ENCODE measurements at regions of chr6 and their contacts with region 1.

Region 1: GRCh38 chr6:34887753-34888513 is at the start of gene TAF11:
- DNase-seq: peak; percentile 91 to 93
- H3K4me3 ChIP-seq: peak within 1 kb of the TSS; percentile 56
- H3K4me3 Mint-ChIP-seq: peak within 1 kb of the TSS; percentile 98
- H3K27ac Mint-ChIP-seq: peak within 1 kb of the TSS; percentile 98
- H3K4me1 ChIP-seq: peaks cover 7% of the 10 kb centered on the region
- H3K4me1 Mint-ChIP-seq: peaks cover 16% of the 10 kb centered on the region
- H3K27me3 ChIP-seq: no peaks in the 10 kb centered on the region
- H3K27me3 Mint-ChIP-seq: no peaks in the 10 kb centered on the region
- CTCF ChIP-seq: no peak
- total RNA-seq, gene TAF11: 26.2 and 28.3 TPM in 2 replicates

Region 2: GRCh38 chr6:34940030-34940434 is 52.1 kb after region 1 on chr6:
- CTCF ChIA-PET with region 1: no interaction called
- POLR2A ChIA-PET with region 1: interaction called, 4 read pairs
- intact Hi-C with region 1: loop called (anchors 5 kb)
- DNase-seq: peak; percentile 65
- H3K4me3 ChIP-seq: no peak overlapping the region
- H3K4me3 Mint-ChIP-seq: peak overlapping the region; percentile 30
- H3K27ac Mint-ChIP-seq: peak overlapping the region; percentile 16
- H3K4me1 ChIP-seq: peaks cover 28% of the 10 kb centered on the region
- H3K4me1 Mint-ChIP-seq: peaks cover 22% of the 10 kb centered on the region
- H3K27me3 ChIP-seq: no peaks in the 10 kb centered on the region
- H3K27me3 Mint-ChIP-seq: no peaks in the 10 kb centered on the region
- CTCF ChIP-seq: no peak

Region 3: GRCh38 chr6:35031611-35032529 is 143.9 kb after region 1 on chr6:
- CTCF ChIA-PET with region 1: no interaction called
- POLR2A ChIA-PET with region 1: no interaction called
- intact Hi-C with region 1: no loop called
- DNase-seq: peak; percentile 13 to 39
- H3K4me3 ChIP-seq: no peak overlapping the region
- H3K4me3 Mint-ChIP-seq: no peak overlapping the region
- H3K27ac Mint-ChIP-seq: peak overlapping the region; percentile 3
- H3K4me1 ChIP-seq: peaks cover 11% of the 10 kb centered on the region
- H3K4me1 Mint-ChIP-seq: peaks cover 11% of the 10 kb centered on the region
- H3K27me3 ChIP-seq: no peaks in the 10 kb centered on the region
- H3K27me3 Mint-ChIP-seq: no peaks in the 10 kb centered on the region
- CTCF ChIP-seq: no peak

Region 4: DNA sequence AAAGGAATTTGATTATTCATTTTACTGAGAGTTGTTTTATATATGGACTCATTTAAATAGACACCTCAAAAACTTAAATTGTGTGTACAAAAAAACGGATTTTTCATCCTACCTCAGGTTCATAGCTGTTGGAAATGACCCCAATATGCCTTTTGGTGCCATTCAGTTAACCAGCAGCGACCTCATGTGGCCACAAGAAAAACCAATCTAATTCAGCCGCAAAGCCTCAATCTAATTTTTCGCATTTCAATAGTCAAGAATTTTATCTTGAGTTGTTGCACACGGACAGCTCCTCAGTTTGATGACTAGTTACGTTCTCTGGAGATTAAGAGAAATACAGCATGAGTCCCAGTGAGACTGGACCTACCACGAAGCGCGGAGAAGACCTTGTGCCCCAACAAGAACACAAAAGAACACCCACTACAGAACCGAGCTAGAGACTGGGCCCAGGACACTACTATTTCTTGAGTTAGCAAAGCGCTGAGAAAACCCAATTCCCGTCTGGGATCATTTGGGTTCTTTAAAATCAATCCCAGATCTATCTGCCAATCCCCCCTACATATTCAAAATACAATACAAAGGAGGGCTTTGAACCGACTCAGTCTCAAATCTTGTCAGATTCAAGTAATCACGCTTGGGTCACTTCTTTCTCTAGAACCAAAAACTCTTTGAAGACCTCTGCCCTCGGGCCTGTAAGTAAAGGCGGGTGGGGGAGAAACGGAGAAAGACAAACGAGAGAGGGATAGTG is 252.1 kb after region 1 on chr6:
- CTCF ChIA-PET with region 1: interaction called, 3 read pairs
- POLR2A ChIA-PET with region 1: no interaction called
- intact Hi-C with region 1: loop called (anchors 5 kb)
- DNase-seq: peak in 1 of 2 experiments; percentile 49
- H3K4me3 ChIP-seq: no peak overlapping the region
- H3K4me3 Mint-ChIP-seq: no peak overlapping the region
- H3K27ac Mint-ChIP-seq: no peak overlapping the region
- H3K4me1 ChIP-seq: no peaks in the 10 kb centered on the region
- H3K4me1 Mint-ChIP-seq: peaks cover 12% of the 10 kb centered on the region
- H3K27me3 ChIP-seq: no peaks in the 10 kb centered on the region
- H3K27me3 Mint-ChIP-seq: no peaks in the 10 kb centered on the region
- CTCF ChIP-seq: peak; percentile 73 to 82